ENCODE measurements at regions of chr5 and their contacts with region 1.

Region 1: DNA sequence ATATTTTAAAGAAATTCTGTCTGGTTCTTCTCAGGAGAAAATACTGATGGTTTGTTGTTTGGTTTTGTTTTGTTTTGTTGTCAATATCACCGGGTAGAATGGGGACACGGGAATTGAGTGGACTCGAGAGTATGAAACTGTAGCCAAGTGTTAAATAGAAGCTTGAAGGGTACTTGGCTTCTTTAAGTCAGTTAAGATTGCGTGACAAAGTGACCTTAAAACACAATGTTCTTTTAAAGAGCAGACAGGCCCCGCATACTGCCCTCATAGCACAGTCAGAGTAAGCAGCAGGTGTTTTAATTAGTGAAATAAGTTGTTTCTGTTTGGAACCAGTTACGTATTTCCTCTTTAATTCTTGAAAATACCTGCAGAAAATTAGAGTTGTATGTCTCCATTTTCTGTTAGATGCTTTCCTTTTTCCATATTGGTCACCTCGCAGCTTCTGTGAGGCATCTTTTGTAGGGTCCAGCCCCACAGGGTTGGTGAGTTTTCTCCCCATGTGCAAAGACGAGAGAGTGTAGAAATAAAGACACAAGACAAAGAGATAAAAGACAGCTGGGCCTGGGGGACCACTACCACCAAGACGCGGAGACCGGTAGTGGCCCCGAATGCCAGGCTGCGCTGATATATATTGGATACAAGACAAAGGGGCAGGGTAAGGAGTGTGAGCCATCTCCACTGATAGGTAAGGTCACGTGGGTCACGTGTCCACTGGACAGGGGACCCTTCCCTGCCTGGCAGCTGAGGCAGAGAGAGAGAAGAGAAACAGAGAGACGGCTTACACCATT is 9.6 kb downstream of the TRIP13 start:
- DNase-seq: no peak
- H3K4me3 ChIP-seq: no peak overlapping the region
- H3K27ac ChIP-seq: no peak overlapping the region
- H3K27me3 ChIP-seq: no peaks in the 10 kb centered on the region
- CTCF ChIP-seq: no peak

Region 2: GRCh38 chr5:188488-189481 is 713.5 kb before region 1 on chr5:
- CTCF ChIA-PET with region 1: no interaction called
- POLR2A ChIA-PET with region 1: no interaction called
- DNase-seq: peak; percentile 46
- H3K4me3 ChIP-seq: 0 out of 2 replicates have a peak overlapping the region, but pooled peaks have one; percentile 12
- H3K27ac ChIP-seq: no peak overlapping the region
- H3K27me3 ChIP-seq: peaks cover 14% of the 10 kb centered on the region
- CTCF ChIP-seq: peak; percentile 90

Region 3: DNA sequence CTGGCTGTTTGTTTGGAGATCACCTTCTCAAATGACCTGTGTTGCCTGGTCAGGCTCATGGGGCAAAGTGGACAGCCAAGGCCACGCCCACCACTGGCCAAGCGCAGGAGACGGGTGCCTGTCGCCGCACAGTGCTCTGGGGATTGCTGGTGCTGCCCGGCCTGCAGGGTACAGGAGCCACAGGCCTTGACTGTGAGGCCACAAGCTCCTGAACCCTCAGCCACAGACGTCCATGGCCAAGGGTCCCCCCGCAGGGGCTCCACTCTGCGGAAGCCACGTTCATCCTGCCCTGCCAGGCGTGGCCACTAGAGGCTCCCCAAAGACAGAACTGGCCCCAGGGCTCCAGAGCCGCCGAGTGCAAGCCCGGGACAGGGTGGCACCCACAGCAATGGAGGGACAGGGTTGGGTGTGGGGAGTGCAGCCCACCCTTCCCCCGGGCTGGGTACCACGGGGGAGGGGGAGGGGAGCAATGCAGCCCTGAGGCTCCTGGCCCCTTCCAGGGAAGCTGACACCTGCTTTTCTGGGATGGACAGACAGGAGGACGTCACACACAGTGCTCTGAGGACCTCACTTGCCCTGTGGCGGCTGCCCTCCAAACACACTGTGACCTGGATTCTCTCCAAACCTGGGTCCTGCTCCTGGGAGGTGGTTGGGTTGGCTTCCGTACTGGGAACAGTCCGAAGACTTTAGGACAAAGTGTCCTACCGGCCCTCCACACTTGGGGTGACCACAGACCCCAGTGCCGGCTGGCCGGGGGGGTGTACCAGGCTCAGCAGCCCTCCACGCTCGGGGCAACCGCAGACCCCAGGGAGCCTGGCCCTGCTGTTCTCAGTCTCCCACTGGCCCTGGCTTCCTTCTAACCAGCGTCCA is 230.6 kb before region 1 on chr5:
- CTCF ChIA-PET with region 1: interaction called, 72 read pairs
- POLR2A ChIA-PET with region 1: no interaction called
- DNase-seq: peak; percentile 6
- H3K4me3 ChIP-seq: peak overlapping the region; percentile 31; the same call in 1 of the 2 replicates
- H3K27ac ChIP-seq: no peak overlapping the region
- H3K27me3 ChIP-seq: peaks cover 18% of the 10 kb centered on the region
- CTCF ChIP-seq: peak; percentile 94

Region 4: GRCh38 chr5:883475-884181 is 18.7 kb before region 1 on chr5:
- CTCF ChIA-PET with region 1: no interaction called
- POLR2A ChIA-PET with region 1: no interaction called
- DNase-seq: no peak
- H3K4me3 ChIP-seq: no peak overlapping the region
- H3K27ac ChIP-seq: no peak overlapping the region
- H3K27me3 ChIP-seq: no peaks in the 10 kb centered on the region
- CTCF ChIP-seq: no peak

Region 5: GRCh38 chr5:912280-913091 is 10.2 kb after region 1 on chr5:
- CTCF ChIA-PET with region 1: interaction called, 12 read pairs
- POLR2A ChIA-PET with region 1: no interaction called
- DNase-seq: peak; percentile 76
- H3K4me3 ChIP-seq: no peak overlapping the region
- H3K27ac ChIP-seq: peak overlapping the region; percentile 70
- H3K27me3 ChIP-seq: no peaks in the 10 kb centered on the region
- CTCF ChIP-seq: no peak; the same call in 1 of the 2 replicates

Measured in AG04450 (cell line).